Activated CD4-positive, alpha-beta T cell treated with anti-CD3 and anti-CD28 coated beads, Interleukin-2, amount 10 ng/mL, durations not matched to agents 24 days and 14 days (primary cell): ENCODE measurements at regions of chr4 and their contacts with region 1.

Region 1: GRCh38 chr4:70839589-70840093 is at the start of gene GRSF1:
- DNase-seq: peak; percentile 98
- H3K4me3 Mint-ChIP-seq: peak within 1 kb of the TSS; percentile 100
- H3K27ac Mint-ChIP-seq: peak within 1 kb of the TSS; percentile 99
- H3K4me1 Mint-ChIP-seq: peaks cover 35% of the 10 kb centered on the region
- H3K27me3 Mint-ChIP-seq: no peaks in the 10 kb centered on the region
- total RNA-seq, gene GRSF1: 122 and 124 TPM in 2 replicates

Region 2: DNA sequence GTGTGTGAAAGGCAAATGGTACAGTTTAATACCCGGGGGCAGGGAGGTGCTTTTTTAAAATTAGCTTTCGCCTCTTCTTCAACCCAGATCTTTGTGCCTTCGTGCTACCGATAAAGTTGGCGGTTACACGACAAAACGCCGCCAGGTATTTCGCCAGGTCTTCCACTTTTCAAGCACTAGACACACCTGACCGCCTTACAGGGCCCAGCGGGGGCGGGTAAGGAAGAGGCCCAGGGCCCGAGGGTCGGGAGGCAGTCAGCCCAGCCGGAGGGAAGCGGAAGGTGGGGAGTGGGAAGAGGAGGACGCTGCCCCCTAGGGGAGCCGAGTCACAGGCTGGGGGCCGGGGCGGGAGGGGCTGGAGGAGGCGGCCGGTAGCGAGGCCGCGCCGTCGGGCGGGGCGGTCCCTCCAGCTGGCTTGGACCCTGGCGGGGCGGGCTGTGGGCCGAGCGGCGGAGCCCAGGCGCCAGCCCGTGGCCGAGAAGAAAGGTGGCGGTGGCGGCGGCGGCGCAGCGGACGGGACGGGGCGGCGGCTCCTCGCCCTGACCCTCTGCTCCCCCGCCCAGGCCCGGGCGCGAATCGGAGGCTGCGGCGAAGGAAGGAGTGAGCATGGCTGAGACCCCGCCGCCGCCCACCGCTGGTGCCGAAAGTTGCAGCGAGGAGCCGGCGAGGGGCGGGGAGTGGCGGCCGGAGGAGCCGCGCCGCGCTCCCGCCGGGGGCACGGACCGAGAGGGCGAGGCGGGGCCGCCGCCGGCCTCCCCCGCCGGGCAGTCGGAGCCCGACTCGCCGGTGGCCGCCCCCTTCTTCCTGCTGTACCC is 135.1 kb before region 1 on chr4:
- intact Hi-C with region 1: loop called (anchors 5 kb)
- DNase-seq: peak; percentile 84
- H3K4me3 Mint-ChIP-seq: peak overlapping the region; percentile 87
- H3K27ac Mint-ChIP-seq: peak overlapping the region; percentile 91
- H3K4me1 Mint-ChIP-seq: peaks cover 24% of the 10 kb centered on the region
- H3K27me3 Mint-ChIP-seq: no peaks in the 10 kb centered on the region

Region 3: GRCh38 chr4:70863099-70863790 is 23.6 kb after region 1 on chr4:
- intact Hi-C with region 1: loop called (anchors 1 kb)
- DNase-seq: peak; percentile 72
- H3K4me3 Mint-ChIP-seq: peak overlapping the region; percentile 57
- H3K27ac Mint-ChIP-seq: peak overlapping the region; percentile 72
- H3K4me1 Mint-ChIP-seq: peaks cover 13% of the 10 kb centered on the region
- H3K27me3 Mint-ChIP-seq: no peaks in the 10 kb centered on the region

Region 4: GRCh38 chr4:70927502-70928137 is 88.0 kb after region 1 on chr4:
- intact Hi-C with region 1: loop called (anchors 5 kb)
- DNase-seq: peak; percentile 77
- H3K4me3 Mint-ChIP-seq: peak overlapping the region; percentile 25
- H3K27ac Mint-ChIP-seq: peak overlapping the region; percentile 30
- H3K4me1 Mint-ChIP-seq: peaks cover 36% of the 10 kb centered on the region
- H3K27me3 Mint-ChIP-seq: no peaks in the 10 kb centered on the region